ENCODE measurements at regions of chr6 and their contacts with region 1.

Region 1: DNA sequence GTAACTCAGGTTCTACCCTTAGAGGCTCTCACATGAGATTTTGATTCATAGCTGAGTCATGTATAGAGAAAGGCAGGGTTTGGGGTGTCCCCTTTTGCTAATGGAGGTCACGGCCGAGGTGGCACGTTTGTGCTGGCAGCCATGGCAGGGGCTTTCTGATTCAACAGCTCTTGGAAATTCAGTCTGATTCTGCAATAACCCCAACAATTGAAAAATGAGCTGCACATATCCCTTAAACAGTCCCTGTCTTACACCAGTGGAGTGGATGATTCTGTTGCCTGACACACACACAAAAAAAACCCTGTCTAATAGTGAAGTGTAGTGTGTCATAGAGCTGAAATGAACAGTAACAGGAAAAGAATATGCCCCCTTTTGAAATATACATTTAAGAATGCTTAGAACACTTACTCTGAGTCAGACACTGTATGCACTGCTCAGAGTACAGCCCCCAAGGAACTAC is 40.4 kb upstream of the ARG1 start:
- DNase-seq: peak; percentile 31
- H3K4me3 ChIP-seq: no peak overlapping the region
- H3K27ac ChIP-seq: no peak overlapping the region
- H3K4me1 ChIP-seq: 0 out of 2 replicates have a peak, but pooled peaks cover 3% of the 10 kb centered on the region
- H3K27me3 ChIP-seq: 0 out of 2 replicates have a peak, but pooled peaks cover under 1% of the 10 kb centered on the region

Region 2: DNA sequence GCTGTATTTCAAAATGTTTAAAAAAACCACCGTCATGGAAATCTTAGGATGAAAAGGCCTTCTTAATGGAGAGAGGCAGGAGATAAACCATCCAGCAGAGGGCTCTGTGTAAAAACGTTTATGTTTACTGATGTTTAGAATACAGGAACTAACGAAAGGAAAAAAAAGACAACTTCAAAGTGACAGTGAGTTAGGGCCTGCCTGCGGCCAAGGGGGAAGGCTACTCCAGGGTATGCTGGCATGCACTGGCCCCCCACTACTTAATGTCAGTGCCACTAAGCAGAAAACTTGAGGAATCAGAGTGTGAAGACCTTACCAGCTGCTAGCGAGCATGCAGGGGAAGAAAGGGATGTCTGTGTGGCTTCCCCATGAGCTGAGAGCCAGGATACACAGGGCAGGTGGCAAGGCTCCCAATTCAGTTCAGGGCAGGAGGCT is 349.6 kb before region 1 on chr6:
- in situ Hi-C with region 1: loop called (anchors 10 kb)
- DNase-seq: peak; percentile 64
- H3K4me3 ChIP-seq: no peak overlapping the region
- H3K27ac ChIP-seq: no peak overlapping the region
- H3K4me1 ChIP-seq: no peaks in the 10 kb centered on the region
- H3K27me3 ChIP-seq: no peaks in the 10 kb centered on the region